ENCODE measurements at regions of chr11 and their contacts with region 1.

Region 1: DNA sequence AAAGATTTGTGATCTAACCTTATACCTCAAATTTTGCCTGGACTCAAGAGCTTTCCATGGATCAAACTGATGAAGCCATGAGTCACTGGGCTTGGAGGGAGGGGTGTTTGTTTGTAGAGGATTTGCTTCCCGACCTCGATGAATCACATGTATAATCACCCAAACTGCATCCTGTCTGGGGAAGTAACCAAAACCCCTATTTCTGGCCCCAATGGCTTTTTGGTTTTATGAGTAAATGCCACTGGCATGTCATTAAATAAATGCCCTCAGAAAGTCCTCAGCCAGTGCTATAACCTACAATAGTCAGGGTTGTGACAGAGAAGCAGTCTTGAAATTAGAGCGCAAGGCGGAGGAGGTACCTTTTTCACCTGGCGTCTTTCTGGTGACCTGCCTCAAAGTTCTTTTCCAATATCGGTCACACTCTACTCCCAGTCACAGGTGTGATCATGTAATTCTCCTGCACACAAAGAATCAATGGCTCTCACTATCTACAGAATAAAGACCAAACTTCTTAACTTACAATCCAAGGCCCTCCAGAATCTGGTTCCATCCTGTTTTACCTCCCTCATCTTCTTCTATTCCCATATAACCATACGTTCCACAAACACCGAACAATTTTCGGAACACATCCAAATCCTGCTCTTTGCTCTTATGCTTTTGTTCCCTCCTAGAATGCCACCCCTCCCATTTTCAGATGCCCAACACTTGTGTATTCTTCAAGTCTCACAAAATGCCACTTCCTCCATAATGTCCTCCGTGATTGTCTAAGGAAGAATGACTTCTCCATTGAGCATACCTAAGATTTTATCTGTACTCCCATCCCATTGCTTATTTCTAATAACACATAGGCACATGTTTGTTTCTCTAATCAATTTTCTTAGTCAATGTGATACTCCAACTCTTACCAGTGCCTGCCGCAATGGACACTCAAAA is 81.3 kb upstream of the BLID start:
- DNase-seq: peak in 2 of 5 donors; percentile 39 to 77
- H3K4me3 ChIP-seq: no peak overlapping the region
- H3K27ac ChIP-seq: no peak overlapping the region
- H3K4me1 ChIP-seq: peaks cover 15% of the 10 kb centered on the region
- H3K27me3 ChIP-seq: no peaks in the 10 kb centered on the region
- CTCF ChIP-seq: no peak
- EP300 ChIP-seq: no peak
- POLR2A ChIP-seq: no peak

Region 2: DNA sequence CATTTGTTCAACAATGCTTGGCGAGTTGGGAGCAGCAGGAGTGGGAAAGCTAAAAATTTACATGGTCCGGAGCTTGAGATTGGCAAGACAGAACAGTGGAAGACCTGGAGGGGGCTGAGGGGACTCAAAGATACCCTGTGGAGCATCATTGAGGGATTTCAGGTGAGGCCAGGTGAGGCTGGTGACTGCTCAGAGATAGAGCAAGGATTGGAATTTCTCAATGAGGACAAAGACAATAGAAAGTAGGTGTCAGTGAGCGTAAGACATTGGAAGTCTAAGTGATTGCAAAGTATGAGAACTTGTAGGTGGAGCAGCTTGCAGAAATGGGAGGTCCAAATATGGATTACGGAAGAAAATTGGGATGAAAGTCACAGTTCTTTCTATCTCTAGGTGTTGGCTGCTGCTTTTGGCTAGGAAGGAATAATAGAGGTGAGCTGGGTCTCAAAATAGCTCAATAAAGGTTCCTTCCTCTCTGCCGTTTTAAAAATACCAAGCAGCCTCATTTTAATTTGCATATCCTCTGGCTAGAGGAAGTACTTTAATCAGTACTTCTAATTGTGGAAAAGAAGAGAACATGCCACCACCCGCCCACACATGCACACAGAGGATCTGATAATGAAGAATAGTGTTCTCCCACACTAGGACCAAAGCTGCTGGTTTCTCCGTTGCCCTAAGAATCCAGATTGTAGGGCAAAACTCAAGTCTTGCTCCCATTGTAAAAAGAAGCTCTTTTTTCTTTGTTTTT is 702.8 kb before region 1 on chr11:
- intact Hi-C with region 1: no loop called
- DNase-seq: no peak
- H3K4me3 ChIP-seq: no peak overlapping the region
- H3K27ac ChIP-seq: no peak overlapping the region
- H3K4me1 ChIP-seq: no peaks in the 10 kb centered on the region
- H3K27me3 ChIP-seq: no peaks in the 10 kb centered on the region
- CTCF ChIP-seq: no peak
- EP300 ChIP-seq: no peak
- POLR2A ChIP-seq: no peak

Region 3: DNA sequence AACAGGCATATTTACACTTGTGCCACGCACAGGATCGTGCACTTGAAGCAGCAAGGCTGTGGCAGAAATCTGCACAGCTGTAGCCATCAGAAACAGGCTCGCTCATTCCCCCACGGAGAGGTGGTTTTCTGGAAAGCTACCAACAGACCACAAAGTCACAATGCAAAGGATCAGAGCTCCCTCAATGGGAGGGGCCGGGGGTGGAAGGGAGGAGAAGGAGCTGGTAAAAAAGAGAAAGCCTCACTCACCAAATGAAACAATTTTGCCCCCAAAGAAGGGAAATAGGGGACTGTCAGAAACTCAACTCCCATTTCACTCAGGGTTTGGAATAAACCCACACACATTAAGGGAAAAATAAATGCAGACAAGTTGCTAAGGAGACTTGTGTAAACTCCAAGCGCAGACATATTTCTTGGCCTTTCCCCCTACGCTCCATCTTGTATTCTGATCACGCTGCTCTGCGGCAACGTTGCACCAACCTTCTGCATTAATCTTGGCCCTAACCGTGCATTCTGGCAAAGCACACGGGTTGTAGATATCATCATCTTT is 38.1 kb before region 1 on chr11:
- intact Hi-C with region 1: loop called in 3 of 4 experiments (anchors 5 to 10 kb)
- DNase-seq: peak; percentile 43 to 56 (median 52)
- H3K4me3 ChIP-seq: peak overlapping the region; percentile 3
- H3K27ac ChIP-seq: peak overlapping the region; percentile 66 to 87
- H3K4me1 ChIP-seq: peaks cover 16% of the 10 kb centered on the region
- H3K27me3 ChIP-seq: no peaks in the 10 kb centered on the region
- CTCF ChIP-seq: no peak
- EP300 ChIP-seq: no peak
- POLR2A ChIP-seq: no peak

Measured in ovary (tissue), 10 donors.